Endothelial cell of umbilical vein (primary cell): ENCODE measurements at regions of chr17 and their contacts with region 1.

Region 1: GRCh38 chr17:67993596-67994361 is 2.5 kb downstream of the C17orf58 start:
- DNase-seq: peak; percentile 74
- H3K4me3 ChIP-seq: peak overlapping the region; percentile 18 to 55 (median 50)
- H3K27ac ChIP-seq: peak overlapping the region; percentile 60
- H3K4me1 ChIP-seq: peaks cover 19% of the 10 kb centered on the region
- H3K27me3 ChIP-seq: no peaks in the 10 kb centered on the region
- CTCF ChIP-seq: no peak
- POLR2A ChIP-seq: no peak

Region 2: GRCh38 chr17:68019675-68020408 is 26.1 kb after region 1 on chr17:
- CTCF ChIA-PET with region 1: interaction called, 13 read pairs
- POLR2A ChIA-PET with region 1: no interaction called
- dilution Hi-C with region 1: no loop called
- intact Hi-C with region 1: loop called (anchors 1 kb)
- DNase-seq: peak; percentile 98
- H3K4me3 ChIP-seq: peak overlapping the region; percentile 37 to 54 (median 38)
- H3K27ac ChIP-seq: peak overlapping the region; percentile 25
- H3K4me1 ChIP-seq: peaks cover 7% of the 10 kb centered on the region
- H3K27me3 ChIP-seq: peaks cover 0 to 6% of the 10 kb centered on the region in 2 experiments
- CTCF ChIP-seq: peak; percentile 40 to 58
- POLR2A ChIP-seq: peak; percentile 91